Naive thymus-derived CD4-positive, alpha-beta T cell (primary cell): ENCODE measurements at regions of chr14 and their contacts with region 1.

Region 1: DNA sequence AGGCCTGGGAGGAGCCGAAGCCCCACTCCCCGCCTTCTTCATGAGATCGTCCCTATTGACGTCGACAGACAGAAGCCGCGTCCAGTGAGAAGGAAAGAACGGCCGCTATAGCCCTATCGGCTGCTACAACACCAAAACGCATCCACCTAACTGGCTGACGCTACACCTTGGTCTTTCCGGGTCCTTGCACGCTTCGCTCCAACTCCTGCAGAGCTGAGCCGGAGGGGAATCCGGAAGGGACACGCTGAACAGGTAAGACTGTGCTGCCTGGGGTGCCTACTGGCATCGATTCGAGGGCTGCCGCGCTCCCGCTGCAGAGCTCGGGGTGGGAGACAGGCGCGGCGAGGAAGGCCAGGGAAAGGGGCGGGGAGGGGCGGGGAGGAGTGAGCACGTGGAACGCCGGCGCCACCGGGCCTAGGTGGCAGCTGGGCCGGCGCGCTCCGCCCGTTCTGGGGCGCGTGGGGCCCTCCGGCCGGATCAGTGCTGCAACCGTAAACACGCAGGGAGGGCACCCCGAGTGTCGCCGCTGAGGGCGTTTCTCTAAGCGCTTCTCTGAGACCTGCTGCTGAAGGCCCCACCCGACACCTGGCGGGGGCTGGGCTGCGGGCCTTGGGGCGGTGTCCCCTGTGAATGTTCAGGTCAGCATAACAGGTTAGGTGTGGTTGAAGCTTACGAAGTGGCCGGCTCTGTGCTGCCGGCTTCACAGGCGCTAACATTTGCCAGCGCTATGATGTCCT is at the start of gene DCAF4:
- DNase-seq: peak; percentile 67 to 96 (median 92)
- ATAC-seq: peak; percentile 96
- H3K4me3 ChIP-seq: peak within 1 kb of the TSS; percentile 64
- H3K4me3 Mint-ChIP-seq: peak within 1 kb of the TSS; percentile 93 to 99 (median 96)
- H3K27ac ChIP-seq: peak within 1 kb of the TSS; percentile 74
- H3K27ac Mint-ChIP-seq: peak within 1 kb of the TSS; percentile 58 to 96 (median 95)
- H3K4me1 ChIP-seq: peaks cover 0 to 3% of the 10 kb centered on the region in 2 donors
- H3K4me1 Mint-ChIP-seq: peaks cover 2 to 27% (median 11%) of the 10 kb centered on the region in 7 donors
- H3K27me3 ChIP-seq: no peaks in the 10 kb centered on the region
- H3K27me3 Mint-ChIP-seq: peaks cover 0 to 21% (median 0%) of the 10 kb centered on the region in 5 donors
- total RNA-seq, gene DCAF4: 17.6 to 37.8 (median 21.8) TPM

Region 2: GRCh38 chr14:72476657-72477499 is 449.6 kb before region 1 on chr14:
- CTCF ChIA-PET with region 1: no interaction called
- POLR2A ChIA-PET with region 1: no interaction called
- intact Hi-C with region 1: loop called in 1 of 2 experiments (anchors 1 kb)
- DNase-seq: peak in 7 of 9 donors; percentile 20 to 75 (median 31)
- ATAC-seq: peak; percentile 85
- H3K4me3 ChIP-seq: peak overlapping the region; percentile 25
- H3K4me3 Mint-ChIP-seq: peak overlapping the region; percentile 34 to 83 (median 72)
- H3K27ac ChIP-seq: peak overlapping the region; percentile 4
- H3K27ac Mint-ChIP-seq: peak overlapping the region; percentile 15 to 93 (median 60)
- H3K4me1 ChIP-seq: peaks cover 10 to 21% of the 10 kb centered on the region in 2 donors
- H3K4me1 Mint-ChIP-seq: peaks cover 24 to 82% (median 45%) of the 10 kb centered on the region in 7 donors
- H3K27me3 ChIP-seq: no peaks in the 10 kb centered on the region
- H3K27me3 Mint-ChIP-seq: peaks cover 0 to 3% (median 0%) of the 10 kb centered on the region in 5 donors

Region 3: DNA sequence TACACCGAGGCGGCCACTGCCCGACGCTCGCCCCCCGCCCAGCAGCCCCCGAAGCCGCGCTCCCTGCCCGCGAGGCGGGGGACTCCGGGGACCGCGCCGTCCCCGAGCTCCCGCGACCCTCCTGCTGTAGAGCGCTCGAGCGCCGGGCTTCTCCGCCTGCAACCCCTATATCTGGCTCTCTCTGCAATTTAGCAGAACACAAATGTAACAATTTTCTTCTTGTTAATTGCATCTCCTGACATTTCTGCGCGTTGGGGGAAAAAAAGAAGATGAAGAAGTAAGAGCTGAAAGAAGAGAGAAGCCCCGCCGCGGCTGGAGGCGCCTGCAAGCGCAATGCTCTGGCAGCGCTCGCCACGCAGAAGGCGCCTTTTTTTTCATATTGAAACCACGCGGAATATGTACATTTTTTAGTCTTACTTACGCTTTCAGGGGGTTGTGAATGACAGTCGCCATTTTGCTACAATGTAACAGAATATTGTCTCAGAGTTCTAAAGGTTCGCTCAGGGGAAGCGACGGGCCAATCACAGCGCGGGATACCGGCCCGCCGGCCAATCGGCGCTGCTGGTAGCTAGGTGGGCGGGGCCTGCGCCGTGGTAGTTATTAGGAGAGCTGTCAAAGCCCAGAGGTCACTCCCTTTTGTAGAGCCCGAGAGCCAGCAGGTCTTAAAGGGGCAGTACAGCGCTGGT is 32.7 kb before region 1 on chr14 and contains the start of gene DPF3:
- CTCF ChIA-PET with region 1: no interaction called
- POLR2A ChIA-PET with region 1: interaction called, 3 read pairs
- intact Hi-C with region 1: loop called (anchors 1 kb)
- DNase-seq: peak; percentile 80 to 91 (median 86)
- ATAC-seq: peak; percentile 99
- H3K4me3 ChIP-seq: peak within 1 kb of the TSS; percentile 74
- H3K4me3 Mint-ChIP-seq: peak within 1 kb of the TSS; percentile 91 to 99 (median 97)
- H3K27ac ChIP-seq: peak within 1 kb of the TSS; percentile 51
- H3K27ac Mint-ChIP-seq: peak within 1 kb of the TSS; percentile 22 to 94 (median 56)
- H3K4me1 ChIP-seq: peaks cover 9 to 20% of the 10 kb centered on the region in 2 donors
- H3K4me1 Mint-ChIP-seq: peaks cover 20 to 36% (median 24%) of the 10 kb centered on the region in 7 donors
- H3K27me3 ChIP-seq: peaks cover 6 to 10% of the 10 kb centered on the region in 2 donors
- H3K27me3 Mint-ChIP-seq: peaks cover 37 to 72% (median 53%) of the 10 kb centered on the region in 5 donors
- total RNA-seq, gene DPF3: 0.24 to 5.5 (median 0.61) TPM in 4 of 5 experiments, not detected in the other

Region 4: DNA sequence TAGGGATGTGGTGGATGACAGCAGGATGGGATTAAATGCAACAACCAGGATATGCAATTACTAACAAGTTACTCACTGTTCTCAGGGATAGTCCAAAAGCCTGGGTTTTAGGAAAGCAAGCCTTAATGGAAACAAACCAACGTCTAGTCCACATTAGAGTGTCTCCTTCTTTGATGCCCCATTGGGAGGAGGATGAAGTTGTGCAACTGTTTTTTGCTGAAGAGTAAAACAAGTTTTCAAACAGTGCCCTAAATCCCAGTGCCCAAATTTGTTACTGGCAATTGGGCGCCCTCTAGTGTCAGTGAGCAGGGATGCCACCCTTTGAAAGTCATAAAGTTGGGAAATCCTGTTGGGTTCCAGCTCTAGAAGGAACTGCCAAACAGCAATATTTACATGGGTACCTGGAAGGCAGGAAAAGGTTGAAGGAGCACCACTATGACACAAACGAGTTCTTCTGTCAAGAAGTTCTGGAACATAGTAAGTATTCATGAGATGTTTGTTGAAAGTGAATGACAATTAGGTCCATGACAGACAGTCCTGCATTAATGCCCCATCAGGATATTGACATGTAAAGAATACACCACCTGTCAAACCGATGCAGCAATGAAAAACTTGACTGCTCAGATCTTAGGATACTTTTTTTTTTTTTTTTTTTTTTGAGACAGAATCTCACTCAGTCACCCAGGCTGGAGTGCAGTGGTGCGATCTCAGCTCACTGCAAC is 21.5 kb before region 1 on chr14:
- CTCF ChIA-PET with region 1: no interaction called
- POLR2A ChIA-PET with region 1: no interaction called
- intact Hi-C with region 1: no loop called
- DNase-seq: peak; percentile 18 to 78 (median 64)
- ATAC-seq: peak; percentile 85
- H3K4me3 ChIP-seq: no peak overlapping the region
- H3K4me3 Mint-ChIP-seq: no peak overlapping the region
- H3K27ac ChIP-seq: no peak overlapping the region
- H3K27ac Mint-ChIP-seq: peak overlapping the region in 1 of 9 donors; percentile 7
- H3K4me1 ChIP-seq: no peaks in the 10 kb centered on the region
- H3K4me1 Mint-ChIP-seq: peaks cover 0 to 24% (median 0%) of the 10 kb centered on the region in 7 donors
- H3K27me3 ChIP-seq: no peaks in the 10 kb centered on the region
- H3K27me3 Mint-ChIP-seq: peaks cover 1 to 42% (median 7%) of the 10 kb centered on the region in 5 donors

Region 5: DNA sequence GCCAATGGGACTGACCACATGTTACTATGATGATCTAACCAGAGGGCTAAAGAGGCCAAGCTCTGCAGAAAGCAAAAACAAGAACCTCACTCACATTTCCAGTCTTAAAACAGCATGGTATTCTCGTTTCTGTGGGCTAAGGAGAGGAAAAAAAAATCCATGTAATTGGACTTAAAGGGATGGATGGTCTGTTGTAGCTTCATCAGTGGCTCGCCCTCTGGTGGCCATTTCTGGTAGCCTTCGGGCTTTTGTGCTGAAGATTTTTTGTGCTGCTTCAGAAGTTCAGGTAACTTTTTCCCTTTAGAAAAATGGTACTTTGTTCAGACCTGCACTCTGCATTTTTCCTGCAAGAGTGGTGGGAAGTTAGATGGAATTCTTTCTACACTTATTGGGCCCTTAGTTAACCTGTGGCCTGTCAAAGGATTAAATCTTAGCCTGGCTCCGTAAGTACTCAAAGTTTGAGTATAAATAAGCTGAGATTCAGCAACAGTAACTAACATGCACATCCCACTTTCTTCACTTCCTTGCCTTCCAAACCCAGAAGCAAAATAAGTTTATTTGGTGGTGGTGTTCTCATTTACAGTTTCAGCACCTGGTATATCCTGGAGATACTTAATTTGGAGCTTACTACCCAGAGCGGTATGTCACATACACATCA is 22.1 kb after region 1 on chr14:
- CTCF ChIA-PET with region 1: interaction called, 3 read pairs
- POLR2A ChIA-PET with region 1: no interaction called
- intact Hi-C with region 1: loop called (anchors 1 kb)
- DNase-seq: peak in 8 of 9 donors; percentile 24 to 63 (median 48)
- ATAC-seq: peak; percentile 65
- H3K4me3 ChIP-seq: no peak overlapping the region
- H3K4me3 Mint-ChIP-seq: no peak overlapping the region
- H3K27ac ChIP-seq: no peak overlapping the region
- H3K27ac Mint-ChIP-seq: no peak overlapping the region
- H3K4me1 ChIP-seq: no peaks in the 10 kb centered on the region
- H3K4me1 Mint-ChIP-seq: peaks cover 0 to 8% (median 0%) of the 10 kb centered on the region in 7 donors
- H3K27me3 ChIP-seq: no peaks in the 10 kb centered on the region
- H3K27me3 Mint-ChIP-seq: no peaks in the 10 kb centered on the region

Region 6: GRCh38 chr14:72962829-72963312 is 36.4 kb after region 1 on chr14:
- CTCF ChIA-PET with region 1: no interaction called
- POLR2A ChIA-PET with region 1: no interaction called
- intact Hi-C with region 1: no loop called
- DNase-seq: no peak
- ATAC-seq: no peak
- H3K4me3 ChIP-seq: no peak overlapping the region
- H3K4me3 Mint-ChIP-seq: peak overlapping the region in 1 of 10 donors; percentile 30
- H3K27ac ChIP-seq: no peak overlapping the region
- H3K27ac Mint-ChIP-seq: peak overlapping the region in 1 of 9 donors; percentile 17
- H3K4me1 ChIP-seq: no peaks in the 10 kb centered on the region
- H3K4me1 Mint-ChIP-seq: peaks cover 0 to 16% (median 0%) of the 10 kb centered on the region in 7 donors
- H3K27me3 ChIP-seq: no peaks in the 10 kb centered on the region
- H3K27me3 Mint-ChIP-seq: no peaks in the 10 kb centered on the region

Region 7: DNA sequence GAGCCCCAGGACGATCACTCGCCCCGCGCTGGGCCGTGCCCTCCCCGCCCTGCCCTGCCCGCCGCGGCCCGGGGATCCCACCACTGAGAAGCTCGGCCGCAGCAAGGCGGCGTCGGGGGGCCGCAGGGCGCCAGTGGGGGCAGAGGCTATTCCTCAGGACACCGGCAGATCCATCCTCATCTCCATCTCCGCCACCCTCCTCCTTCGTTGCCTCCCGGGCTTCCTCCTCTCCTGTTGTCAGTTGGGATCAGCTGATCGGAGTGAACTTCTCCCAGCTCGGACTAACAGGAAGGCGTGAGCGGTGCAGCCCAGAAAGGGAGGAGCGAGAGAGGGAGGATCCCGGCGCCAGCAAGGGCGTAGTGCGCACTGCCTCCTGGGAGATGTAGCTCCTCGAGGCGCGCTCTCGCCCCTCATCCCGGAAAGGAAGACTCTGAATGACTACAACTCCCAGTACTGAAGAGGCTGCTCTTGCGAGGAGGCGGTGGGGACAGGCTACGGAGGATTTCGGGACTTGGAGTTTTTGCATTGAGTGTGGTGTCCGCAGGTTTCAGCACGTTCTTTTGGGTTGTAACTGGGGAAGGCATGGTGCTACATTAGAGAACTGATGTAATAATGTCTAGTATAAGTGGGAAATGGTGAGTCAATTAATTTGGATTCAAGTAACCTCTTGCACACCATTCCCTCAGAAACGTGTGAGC is 100.5 kb after region 1 on chr14 and contains the start of gene ZFYVE1:
- CTCF ChIA-PET with region 1: no interaction called
- POLR2A ChIA-PET with region 1: no interaction called
- intact Hi-C with region 1: loop called (anchors 1 kb)
- DNase-seq: peak; percentile 65 to 91 (median 86)
- ATAC-seq: peak; percentile 100
- H3K4me3 ChIP-seq: peak within 1 kb of the TSS; percentile 74
- H3K4me3 Mint-ChIP-seq: peak within 1 kb of the TSS; percentile 80 to 99 (median 96)
- H3K27ac ChIP-seq: peak within 1 kb of the TSS; percentile 74
- H3K27ac Mint-ChIP-seq: peak within 1 kb of the TSS; percentile 71 to 96 (median 83)
- H3K4me1 ChIP-seq: peaks cover 11 to 12% of the 10 kb centered on the region in 2 donors
- H3K4me1 Mint-ChIP-seq: peaks cover 33 to 50% (median 45%) of the 10 kb centered on the region in 7 donors
- H3K27me3 ChIP-seq: no peaks in the 10 kb centered on the region
- H3K27me3 Mint-ChIP-seq: no peaks in the 10 kb centered on the region
- total RNA-seq, gene ZFYVE1: 15.3 to 24.8 (median 19.1) TPM

Region 8: GRCh38 chr14:73136387-73137225 is 210.1 kb after region 1 on chr14 and contains the start of gene PSEN1:
- CTCF ChIA-PET with region 1: no interaction called
- POLR2A ChIA-PET with region 1: no interaction called
- intact Hi-C with region 1: loop called (anchors 1 kb)
- DNase-seq: peak; percentile 97 to 100 (median 98)
- ATAC-seq: peak; percentile 96
- H3K4me3 ChIP-seq: peak within 1 kb of the TSS; percentile 93
- H3K4me3 Mint-ChIP-seq: peak within 1 kb of the TSS; percentile 82 to 99 (median 91)
- H3K27ac ChIP-seq: peak within 1 kb of the TSS; percentile 98
- H3K27ac Mint-ChIP-seq: peak within 1 kb of the TSS; percentile 71 to 99 (median 96)
- H3K4me1 ChIP-seq: peaks cover 7 to 17% of the 10 kb centered on the region in 2 donors
- H3K4me1 Mint-ChIP-seq: peaks cover 17 to 39% (median 36%) of the 10 kb centered on the region in 7 donors
- H3K27me3 ChIP-seq: no peaks in the 10 kb centered on the region
- H3K27me3 Mint-ChIP-seq: no peaks in the 10 kb centered on the region
- total RNA-seq, gene PSEN1: 32.7 to 55.8 (median 49.3) TPM

Region 9: DNA sequence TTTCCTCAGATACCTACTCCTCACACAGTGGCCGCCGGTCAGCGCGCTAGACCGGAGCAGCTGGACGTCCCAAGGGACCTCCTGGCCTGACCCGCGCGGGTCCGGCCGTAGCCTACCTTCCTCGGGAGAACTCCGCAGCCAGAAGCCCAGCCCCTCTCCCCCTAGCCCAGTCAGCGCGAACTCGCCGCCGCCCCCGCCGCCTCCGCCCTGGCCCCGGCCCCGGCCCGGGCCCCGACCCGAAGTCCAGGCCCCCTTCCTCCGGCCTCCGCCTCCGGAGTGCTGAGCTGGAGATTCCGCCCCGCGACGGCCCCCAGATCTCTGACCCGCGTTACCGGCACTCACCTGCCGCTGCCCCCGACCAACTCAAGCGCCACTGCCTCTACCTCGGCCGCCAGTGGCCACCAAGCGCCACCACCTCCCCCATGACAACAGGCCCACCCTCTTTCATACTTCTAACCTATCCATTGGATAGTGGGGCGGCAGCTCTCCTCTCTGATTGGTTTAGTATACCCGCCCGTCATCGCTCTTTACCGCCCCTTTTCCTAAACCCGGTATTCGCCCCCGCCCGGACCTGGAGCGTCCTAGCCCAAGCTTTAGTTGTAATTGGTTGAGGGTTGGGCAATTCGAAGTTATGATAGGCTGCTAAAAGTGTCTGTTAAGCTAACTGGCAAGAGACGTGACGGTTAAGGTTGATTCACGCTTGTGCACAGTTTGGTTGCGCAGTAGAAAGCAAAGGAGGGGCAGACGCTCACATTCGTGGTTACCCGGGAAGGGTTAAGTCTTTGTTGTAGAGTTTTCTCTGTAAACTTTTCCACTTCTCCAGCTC is 531.9 kb after region 1 on chr14 and contains the start of gene NUMB:
- CTCF ChIA-PET with region 1: no interaction called
- POLR2A ChIA-PET with region 1: no interaction called
- intact Hi-C with region 1: loop called (anchors 1 kb)
- DNase-seq: peak; percentile 70 to 99 (median 98)
- ATAC-seq: peak; percentile 99
- H3K4me3 ChIP-seq: peak within 1 kb of the TSS; percentile 71
- H3K4me3 Mint-ChIP-seq: peak within 1 kb of the TSS; percentile 87 to 100 (median 98)
- H3K27ac ChIP-seq: peak within 1 kb of the TSS; percentile 82
- H3K27ac Mint-ChIP-seq: peak within 1 kb of the TSS; percentile 80 to 98 (median 94)
- H3K4me1 ChIP-seq: peaks cover 0 to 9% of the 10 kb centered on the region in 2 donors
- H3K4me1 Mint-ChIP-seq: peaks cover 32 to 48% (median 45%) of the 10 kb centered on the region in 7 donors
- H3K27me3 ChIP-seq: no peaks in the 10 kb centered on the region
- H3K27me3 Mint-ChIP-seq: no peaks in the 10 kb centered on the region
- total RNA-seq, gene NUMB: 48.9 to 90.6 (median 49.4) TPM